Dorsolateral prefrontal cortex (tissue), 120 donors: ENCODE measurements at regions of chr14 and their contacts with region 1.

Region 1: GRCh38 chr14:23555882-23556699 is at the start of gene THTPA:
- DNase-seq: peak; percentile 90 to 96 (median 94)
- H3K4me3 ChIP-seq: peak within 1 kb of the TSS; percentile 56 to 100 (median 91)
- H3K27ac ChIP-seq: peak within 1 kb of the TSS; percentile 90 to 100 (median 99)
- H3K27me3 ChIP-seq: no peaks in the 10 kb centered on the region
- CTCF ChIP-seq: peak in 32 of 56 donors; percentile 4 to 52 (median 30)
- total RNA-seq, gene THTPA: 20.2 to 54.1 (median 34.9) TPM

Region 2: GRCh38 chr14:23494223-23494622 is 61.9 kb before region 1 on chr14:
- intact Hi-C with region 1: no loop called
- DNase-seq: peak in 1 of 10 donors; percentile 15
- H3K4me3 ChIP-seq: no peak overlapping the region
- H3K27ac ChIP-seq: peak overlapping the region in 2 of 59 donors; percentile 3 to 53
- H3K27me3 ChIP-seq: no peaks in the 10 kb centered on the region
- CTCF ChIP-seq: no peak

Region 3: DNA sequence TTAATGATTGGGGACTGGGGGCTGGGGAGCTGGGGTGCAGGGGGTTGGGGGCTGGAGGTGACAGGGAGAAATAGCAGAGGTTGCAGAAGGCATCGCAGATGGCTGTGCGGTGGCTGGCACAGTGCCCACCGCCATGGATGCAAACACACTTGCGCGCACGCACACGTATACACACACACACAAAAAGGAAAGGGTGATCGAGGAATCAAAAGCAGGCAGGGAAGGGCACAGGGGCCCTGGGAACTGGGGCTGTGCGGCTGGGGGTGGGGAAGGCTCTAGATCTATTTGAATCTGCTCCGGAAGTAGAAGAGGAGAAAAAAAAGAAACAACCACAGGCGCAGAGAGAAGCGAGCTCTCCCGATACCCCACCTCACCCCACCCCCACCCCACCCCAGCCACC is 43.9 kb before region 1 on chr14:
- intact Hi-C with region 1: loop called (anchors 2 to 5 kb)
- DNase-seq: peak in 2 of 10 donors; percentile 54 to 59
- H3K4me3 ChIP-seq: peak overlapping the region; percentile 23 to 69 (median 51)
- H3K27ac ChIP-seq: peak overlapping the region in 58 of 59 donors; percentile 62 to 99 (median 96)
- H3K27me3 ChIP-seq: no peaks in the 10 kb centered on the region
- CTCF ChIP-seq: no peak